Heart right ventricle (tissue), 16 donors: ENCODE measurements at regions of chr16 and their contacts with region 1.

Region 1: GRCh38 chr16:11797166-11797956 is at the start of gene ZC3H7A:
- DNase-seq: peak; percentile 96 to 97
- ATAC-seq: peak; percentile 98 to 99 (median 99)
- H3K4me3 ChIP-seq: peak within 1 kb of the TSS; percentile 78 to 100 (median 96)
- H3K27ac ChIP-seq: peak within 1 kb of the TSS; percentile 92 to 100 (median 98)
- H3K4me1 ChIP-seq: peaks cover 3 to 74% (median 64%) of the 10 kb centered on the region in 9 donors
- H3K27me3 ChIP-seq: no peaks in the 10 kb centered on the region
- CTCF ChIP-seq: peak; percentile 66 to 97 (median 83)
- total RNA-seq, gene ZC3H7A: 26.8 to 36.1 (median 30.6) TPM

Region 2: GRCh38 chr16:11734025-11734652 is 63.2 kb before region 1 on chr16:
- intact Hi-C with region 1: loop called in 1 of 10 experiments (anchors 10 kb)
- DNase-seq: peak; percentile 17 to 39
- ATAC-seq: peak; percentile 20 to 83 (median 66)
- H3K4me3 ChIP-seq: no peak overlapping the region
- H3K27ac ChIP-seq: peak overlapping the region in 7 of 10 donors; percentile 12 to 61 (median 32)
- H3K4me1 ChIP-seq: peaks cover 5 to 76% (median 52%) of the 10 kb centered on the region in 9 donors
- H3K27me3 ChIP-seq: no peaks in the 10 kb centered on the region
- CTCF ChIP-seq: no peak

Region 3: DNA sequence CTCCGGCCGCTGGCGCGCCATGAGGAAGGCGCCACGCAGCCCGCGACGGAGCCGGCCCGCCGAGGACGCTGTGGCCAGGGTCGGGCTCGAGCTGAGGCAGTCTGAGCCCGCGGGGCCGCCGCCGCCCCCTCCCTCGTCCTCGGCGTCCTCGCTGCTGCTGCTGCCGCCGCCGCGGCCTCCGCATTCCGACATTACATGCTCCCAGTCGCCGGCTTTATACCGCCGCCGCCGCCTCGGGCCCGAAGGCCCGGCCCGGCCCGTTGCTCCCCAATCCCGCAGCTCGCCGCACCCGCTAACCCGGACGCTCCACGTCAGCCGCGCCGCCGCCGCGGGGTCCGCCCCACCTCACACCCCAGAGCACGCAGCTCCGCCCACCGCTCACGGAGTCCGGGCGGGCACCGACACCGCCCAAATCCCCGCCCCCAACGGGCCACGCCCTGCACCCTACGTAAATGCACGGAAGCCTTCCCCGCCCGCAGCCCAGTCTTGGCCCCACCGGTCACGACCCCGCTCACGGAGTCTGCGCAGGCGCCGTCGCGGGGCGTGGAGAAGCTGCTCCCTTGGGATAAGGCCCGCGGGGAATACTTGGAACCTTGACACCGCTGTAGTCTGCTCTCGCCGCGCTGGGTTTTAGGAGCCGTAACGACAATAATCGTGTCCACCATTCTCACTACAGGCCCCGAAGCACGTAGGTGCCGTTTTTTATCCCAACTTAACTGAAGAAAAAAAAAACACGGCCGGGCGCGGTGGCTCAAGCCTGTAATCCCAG is 54.6 kb before region 1 on chr16 and contains the start of gene TXNDC11:
- intact Hi-C with region 1: loop called in 7 of 10 experiments (anchors 2 to 10 kb)
- DNase-seq: peak; percentile 99 to 100
- ATAC-seq: peak; percentile 98 to 99 (median 99)
- H3K4me3 ChIP-seq: peak within 1 kb of the TSS; percentile 69 to 99 (median 93)
- H3K27ac ChIP-seq: peak within 1 kb of the TSS; percentile 88 to 99 (median 98)
- H3K4me1 ChIP-seq: peaks cover 0 to 57% (median 45%) of the 10 kb centered on the region in 9 donors
- H3K27me3 ChIP-seq: no peaks in the 10 kb centered on the region
- CTCF ChIP-seq: no peak
- total RNA-seq, gene TXNDC11: 16.8 to 29.3 (median 23.9) TPM

Region 4: GRCh38 chr16:11757671-11758545 is 39.5 kb before region 1 on chr16:
- intact Hi-C with region 1: no loop called
- DNase-seq: no peak
- ATAC-seq: peak in 1 of 8 donors; percentile 61
- H3K4me3 ChIP-seq: no peak overlapping the region
- H3K27ac ChIP-seq: peak overlapping the region in 2 of 10 donors; percentile 6 to 26
- H3K4me1 ChIP-seq: peaks cover 0 to 14% (median 9%) of the 10 kb centered on the region in 9 donors
- H3K27me3 ChIP-seq: no peaks in the 10 kb centered on the region
- CTCF ChIP-seq: no peak